Psoas muscle (tissue), 8 donors: ENCODE measurements at regions of chr3 and their contacts with region 1.

Region 1: DNA sequence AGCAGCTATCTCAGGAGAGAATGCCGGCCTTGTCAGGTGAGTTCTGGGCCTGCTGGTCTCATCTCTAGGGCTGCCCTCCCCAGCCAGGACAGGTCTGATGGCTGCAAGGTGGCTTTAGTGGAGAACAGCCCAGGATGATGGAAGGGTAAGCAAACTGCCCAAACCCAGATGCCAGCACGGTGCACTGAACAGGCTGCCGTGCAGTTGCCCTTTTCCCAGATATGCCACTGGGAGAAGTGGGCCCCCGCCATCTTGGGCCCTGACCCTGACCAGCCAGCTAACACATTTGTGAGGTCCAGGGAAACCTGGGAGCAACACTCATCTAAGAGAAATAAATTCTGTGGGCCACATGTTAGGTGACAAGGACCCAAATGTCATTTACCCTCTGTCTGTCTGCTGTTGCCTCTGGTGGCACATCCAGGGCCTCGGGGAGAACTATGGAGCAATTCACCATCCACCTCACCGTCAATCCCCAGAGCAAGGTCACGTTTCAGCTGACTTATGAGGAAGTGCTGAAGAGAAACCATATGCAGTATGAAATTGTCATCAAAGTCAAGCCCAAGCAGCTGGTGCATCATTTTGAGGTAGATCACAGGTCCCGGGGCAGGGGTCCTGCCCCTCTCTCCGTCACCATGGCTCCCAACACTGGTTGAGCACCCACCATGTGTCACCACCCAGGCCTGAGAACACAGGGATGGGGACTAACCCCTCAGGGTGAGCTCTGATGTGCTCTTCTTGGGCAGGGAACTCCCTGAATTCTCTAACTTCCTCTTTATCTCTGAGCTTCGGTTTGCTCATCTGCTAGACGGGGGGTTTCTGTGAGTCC is 1.8 kb downstream of the ITIH1 start:
- DNase-seq: no peak
- ATAC-seq: no peak
- H3K4me3 ChIP-seq: no peak overlapping the region
- H3K27ac ChIP-seq: no peak overlapping the region
- H3K4me1 ChIP-seq: no peaks in the 10 kb centered on the region
- H3K27me3 ChIP-seq: peaks cover 0 to 2% (median 0%) of the 10 kb centered on the region in 3 donors
- CTCF ChIP-seq: no peak

Region 2: GRCh38 chr3:52636673-52637072 is 142.6 kb before region 1 on chr3:
- intact Hi-C with region 1: no loop called
- DNase-seq: no peak
- ATAC-seq: peak in 1 of 4 donors; percentile 61
- H3K4me3 ChIP-seq: no peak overlapping the region
- H3K27ac ChIP-seq: no peak overlapping the region
- H3K4me1 ChIP-seq: no peaks in the 10 kb centered on the region
- H3K27me3 ChIP-seq: no peaks in the 10 kb centered on the region
- CTCF ChIP-seq: no peak

Region 3: DNA sequence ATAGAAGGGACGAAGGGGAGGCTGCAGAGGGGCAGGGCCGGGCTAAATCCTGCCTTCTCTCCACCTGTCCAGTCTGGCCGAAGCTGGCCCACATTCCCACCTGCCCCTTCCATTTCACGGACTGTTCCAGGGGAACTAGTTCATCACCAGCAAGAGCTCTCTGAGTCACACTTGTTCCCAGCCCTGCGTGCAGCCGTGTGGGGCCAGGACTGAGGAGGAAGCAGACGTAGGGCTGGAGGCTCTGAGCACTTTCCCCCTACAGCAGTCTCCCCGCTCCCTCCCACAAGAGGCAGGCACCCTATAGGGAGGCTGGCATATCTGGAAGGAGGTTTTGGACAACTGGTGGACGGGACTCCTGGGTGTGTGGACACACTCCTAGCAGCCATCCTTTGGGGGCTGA is 48.2 kb after region 1 on chr3:
- intact Hi-C with region 1: loop called in 1 of 2 experiments (anchors 5 kb)
- DNase-seq: no peak
- ATAC-seq: peak in 1 of 4 donors; percentile 15
- H3K4me3 ChIP-seq: no peak overlapping the region
- H3K27ac ChIP-seq: peak overlapping the region; percentile 46
- H3K4me1 ChIP-seq: peaks cover 26% of the 10 kb centered on the region
- H3K27me3 ChIP-seq: no peaks in the 10 kb centered on the region
- CTCF ChIP-seq: no peak

Region 4: DNA sequence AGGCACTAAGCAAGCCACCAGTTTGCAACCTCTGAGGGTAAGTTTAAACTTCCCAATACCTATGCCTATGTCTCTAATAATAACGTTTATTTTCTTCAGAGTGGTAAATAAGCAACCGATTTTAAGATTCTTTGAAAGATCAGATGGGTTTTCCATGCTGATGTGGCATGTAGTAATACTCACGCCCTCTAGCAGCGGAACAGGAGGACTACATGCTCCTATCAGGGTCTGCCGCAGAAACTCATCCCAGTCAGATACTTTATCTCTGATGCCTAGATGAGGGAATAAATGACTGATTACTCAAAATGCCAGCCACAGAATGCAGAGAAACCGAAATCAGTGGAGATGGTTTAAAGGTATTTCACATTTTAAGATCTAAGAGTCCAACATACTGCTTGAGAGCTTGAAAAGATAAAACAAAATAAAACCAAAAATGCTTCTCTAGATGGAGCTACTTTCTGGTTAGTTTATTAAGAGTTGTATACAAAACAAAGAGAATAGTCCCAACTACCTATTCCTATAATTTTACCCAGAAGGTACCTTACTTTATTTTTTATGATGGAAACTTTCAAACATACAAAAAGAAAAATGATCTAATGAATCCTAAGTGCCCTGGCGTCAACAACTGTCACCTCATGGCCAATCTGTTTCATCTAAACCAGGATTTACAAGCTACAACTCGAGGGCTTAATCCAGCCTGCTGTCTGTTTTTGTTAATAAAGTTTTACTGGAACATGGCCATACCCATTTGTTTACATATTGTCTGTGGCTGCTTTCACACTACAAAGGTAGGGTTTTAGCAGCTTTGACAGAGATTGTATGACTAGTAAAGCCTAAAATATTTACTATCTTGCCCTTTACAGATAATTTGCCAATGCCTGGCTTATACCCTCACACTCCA is 155.7 kb after region 1 on chr3:
- intact Hi-C with region 1: no loop called
- DNase-seq: peak in 1 of 2 donors; percentile 24
- ATAC-seq: peak; percentile 71 to 95 (median 82)
- H3K4me3 ChIP-seq: no peak overlapping the region
- H3K27ac ChIP-seq: no peak overlapping the region
- H3K4me1 ChIP-seq: peaks cover 4% of the 10 kb centered on the region
- H3K27me3 ChIP-seq: no peaks in the 10 kb centered on the region
- CTCF ChIP-seq: peak; percentile 79